Vagina (tissue), 2 donors: ENCODE measurements at regions of chr11 and their contacts with region 1.

Region 1: GRCh38 chr11:78416305-78417178 is 1.1 kb downstream of the GAB2 start:
- DNase-seq: peak in 1 of 2 donors; percentile 97
- H3K4me3 ChIP-seq: peak overlapping the region; percentile 81 to 98
- H3K27ac ChIP-seq: peak overlapping the region; percentile 98
- H3K4me1 ChIP-seq: peaks cover 53% of the 10 kb centered on the region
- H3K27me3 ChIP-seq: no peaks in the 10 kb centered on the region
- CTCF ChIP-seq: peak in 1 of 3 experiments; percentile 48
- POLR2A ChIP-seq: peak in 1 of 2 donors; percentile 69

Region 2: DNA sequence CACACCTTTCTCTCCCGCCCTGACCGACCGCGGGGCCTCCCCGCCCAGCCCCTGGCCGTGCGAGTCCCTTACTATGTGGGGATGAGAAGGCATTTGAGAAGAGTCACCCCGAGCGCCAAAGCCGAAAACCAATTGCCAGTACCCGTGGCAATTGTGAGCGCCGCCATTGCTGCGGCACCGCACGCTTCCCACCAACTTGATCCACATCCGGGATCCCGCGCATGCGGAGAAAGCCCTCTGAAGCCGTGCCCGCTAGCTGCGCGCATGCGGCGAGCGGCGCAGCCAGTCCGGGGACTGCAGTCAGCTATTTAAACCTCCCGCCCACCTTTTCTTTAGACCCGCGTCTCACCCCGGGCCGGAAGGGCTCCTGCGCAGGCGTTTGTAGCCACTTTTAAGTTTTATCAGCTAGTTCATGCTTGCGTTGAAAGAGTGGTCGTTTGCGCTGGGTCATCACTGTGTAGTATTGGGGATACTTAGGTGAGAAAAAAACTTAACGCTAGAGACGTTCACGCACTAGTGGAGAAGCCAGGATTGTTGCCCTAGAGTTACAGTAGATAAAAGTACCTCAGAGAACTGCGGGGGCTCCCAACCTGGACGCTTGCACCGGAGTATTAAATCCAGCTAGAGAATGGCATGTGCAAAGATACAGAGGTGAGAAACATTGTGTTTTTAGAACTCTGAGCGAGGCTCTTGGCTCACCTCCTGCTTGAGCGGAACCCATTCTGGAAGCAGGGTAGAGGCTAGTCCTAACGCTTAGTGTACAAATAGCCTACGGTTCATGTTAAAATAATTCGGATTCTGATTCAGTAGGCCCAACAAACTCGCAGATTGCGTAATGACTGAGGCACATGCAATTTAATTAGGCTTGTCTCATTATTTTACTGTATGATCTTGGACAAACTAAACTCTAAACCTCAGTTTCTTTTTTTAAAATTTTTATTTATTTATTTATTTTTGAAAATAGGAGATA is 276.8 kb before region 1 on chr11 and contains the start of gene ALG8:
- intact Hi-C with region 1: loop called (anchors 10 kb)
- DNase-seq: peak in 1 of 2 donors; percentile 93
- H3K4me3 ChIP-seq: peak within 1 kb of the TSS; percentile 66 to 89
- H3K27ac ChIP-seq: peak within 1 kb of the TSS; percentile 34
- H3K4me1 ChIP-seq: peaks cover 20% of the 10 kb centered on the region
- H3K27me3 ChIP-seq: no peaks in the 10 kb centered on the region
- CTCF ChIP-seq: no peak
- POLR2A ChIP-seq: no peak
- total RNA-seq, gene ALG8: 20.9 TPM

Region 3: DNA sequence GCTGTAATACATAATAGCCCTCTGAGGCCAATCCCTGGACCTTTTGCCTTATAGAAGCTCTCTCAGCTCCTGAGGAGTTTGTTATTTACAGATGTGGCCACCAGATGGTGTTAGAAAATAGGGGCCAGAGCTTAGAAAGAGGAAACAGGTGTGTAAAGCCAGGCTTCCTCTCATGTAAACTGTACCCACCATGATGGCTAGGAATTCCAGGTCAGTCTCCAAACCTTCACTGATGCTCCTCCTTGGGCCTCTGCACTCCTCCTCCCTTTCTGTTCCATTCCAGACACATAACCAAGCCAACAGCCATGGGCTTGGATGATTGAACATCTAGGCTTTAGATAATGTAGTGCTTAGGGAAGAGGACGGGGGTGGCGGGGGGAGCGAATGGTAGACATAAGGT is 188.1 kb before region 1 on chr11:
- intact Hi-C with region 1: loop called (anchors 10 kb)
- DNase-seq: peak in 1 of 2 donors; percentile 81
- H3K4me3 ChIP-seq: no peak overlapping the region
- H3K27ac ChIP-seq: no peak overlapping the region
- H3K4me1 ChIP-seq: peaks cover 35% of the 10 kb centered on the region
- H3K27me3 ChIP-seq: no peaks in the 10 kb centered on the region
- CTCF ChIP-seq: peak; percentile 15 to 47 (median 29)
- POLR2A ChIP-seq: no peak

Region 4: DNA sequence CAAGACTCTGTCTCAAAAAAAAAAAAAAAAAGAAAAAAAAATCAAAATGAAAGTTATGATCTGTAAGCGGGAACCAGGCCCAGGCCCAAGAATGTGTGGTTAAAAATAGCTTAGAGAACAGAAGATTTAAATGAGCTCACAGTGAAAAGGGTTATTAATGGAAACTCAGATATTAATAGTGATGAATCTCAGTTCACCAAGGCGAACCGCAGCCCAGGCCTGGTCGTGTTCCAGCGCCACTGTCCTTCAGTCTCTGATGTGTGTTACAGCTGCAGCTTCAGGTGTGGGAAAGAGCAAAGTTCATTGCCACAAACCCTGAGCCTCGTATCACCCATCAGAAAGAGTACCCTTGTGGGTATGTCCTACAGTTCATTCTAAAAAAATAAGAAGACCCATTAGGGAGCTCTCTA is 106.0 kb before region 1 on chr11:
- intact Hi-C with region 1: loop called (anchors 10 kb)
- DNase-seq: no peak
- H3K4me3 ChIP-seq: no peak overlapping the region
- H3K27ac ChIP-seq: no peak overlapping the region
- H3K4me1 ChIP-seq: peaks cover 54% of the 10 kb centered on the region
- H3K27me3 ChIP-seq: no peaks in the 10 kb centered on the region
- CTCF ChIP-seq: no peak
- POLR2A ChIP-seq: no peak

Region 5: GRCh38 chr11:78397387-78397786 is 19.2 kb before region 1 on chr11:
- intact Hi-C with region 1: no loop called
- DNase-seq: no peak
- H3K4me3 ChIP-seq: no peak overlapping the region
- H3K27ac ChIP-seq: no peak overlapping the region
- H3K4me1 ChIP-seq: peaks cover 14% of the 10 kb centered on the region
- H3K27me3 ChIP-seq: no peaks in the 10 kb centered on the region
- CTCF ChIP-seq: no peak
- POLR2A ChIP-seq: no peak

Region 6: GRCh38 chr11:78564490-78565467 is 148.2 kb after region 1 on chr11:
- intact Hi-C with region 1: loop called (anchors 5 kb)
- DNase-seq: no peak
- H3K4me3 ChIP-seq: no peak overlapping the region
- H3K27ac ChIP-seq: peak overlapping the region; percentile 39
- H3K4me1 ChIP-seq: peaks cover 39% of the 10 kb centered on the region
- H3K27me3 ChIP-seq: no peaks in the 10 kb centered on the region
- CTCF ChIP-seq: peak; percentile 44 to 72 (median 51)
- POLR2A ChIP-seq: no peak